Left cardiac atrium (tissue), 4 donors: ENCODE measurements at regions of chr18 and their contacts with region 1.

Region 1: GRCh38 chr18:3771121-3771971 is 321.4 kb downstream of the TGIF1 start:
- DNase-seq: peak; percentile 88
- ATAC-seq: peak; percentile 99 to 100

Region 2: GRCh38 chr18:3869848-3870247 is 98.5 kb after region 1 on chr18:
- intact Hi-C with region 1: loop called (anchors 5 to 10 kb)
- DNase-seq: no peak
- ATAC-seq: peak; percentile 52 to 66

Region 3: GRCh38 chr18:3995476-3996102 is 224.2 kb after region 1 on chr18:
- intact Hi-C with region 1: loop called (anchors 2 to 5 kb)
- DNase-seq: peak; percentile 47
- ATAC-seq: peak in 1 of 2 donors; percentile 52

Region 4: DNA sequence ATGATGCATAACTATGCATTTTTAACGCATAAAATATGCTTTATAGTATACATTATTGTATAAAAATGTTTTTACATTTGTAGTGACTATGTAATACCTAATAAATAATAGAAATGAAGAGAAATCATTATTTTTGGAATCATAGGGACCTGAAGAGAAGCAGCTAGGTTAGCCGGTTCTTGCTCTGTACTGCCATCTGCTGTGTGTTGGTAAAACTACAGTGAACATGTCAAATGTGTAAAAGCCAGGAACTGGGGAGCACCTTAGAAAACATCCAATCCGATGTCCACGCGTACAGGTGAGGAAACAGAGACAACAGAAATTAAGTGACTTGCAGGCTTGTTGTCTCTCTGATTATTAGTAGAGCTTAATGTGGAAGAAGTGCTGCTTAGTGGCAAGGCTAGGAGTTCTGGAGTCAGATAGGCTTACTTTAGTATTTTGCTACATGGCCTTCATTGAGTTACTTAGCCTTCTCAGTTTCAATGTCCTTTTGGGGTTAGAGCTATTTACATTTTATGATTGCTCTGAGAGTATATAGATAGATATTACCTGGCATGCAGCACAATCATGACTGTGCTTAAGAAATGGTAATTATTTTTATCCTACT is 297.3 kb after region 1 on chr18:
- intact Hi-C with region 1: loop called in 1 of 2 experiments (anchors 5 kb)
- DNase-seq: no peak
- ATAC-seq: no peak